Naive thymus-derived CD4-positive, alpha-beta T cell (primary cell): ENCODE measurements at regions of chr4 and their contacts with region 1.

Region 1: GRCh38 chr4:155353923-155354540 is 22.7 kb downstream of the MAP9 start:
- DNase-seq: no peak
- ATAC-seq: peak; percentile 65
- H3K4me3 ChIP-seq: no peak overlapping the region
- H3K4me3 Mint-ChIP-seq: no peak overlapping the region
- H3K27ac ChIP-seq: no peak overlapping the region
- H3K27ac Mint-ChIP-seq: no peak overlapping the region
- H3K4me1 ChIP-seq: no peaks in the 10 kb centered on the region
- H3K4me1 Mint-ChIP-seq: peaks cover 0 to 5% (median 0%) of the 10 kb centered on the region in 7 donors
- H3K27me3 ChIP-seq: no peaks in the 10 kb centered on the region
- H3K27me3 Mint-ChIP-seq: no peaks in the 10 kb centered on the region

Region 2: GRCh38 chr4:154807042-154807630 is 546.9 kb before region 1 on chr4:
- CTCF ChIA-PET with region 1: no interaction called
- POLR2A ChIA-PET with region 1: no interaction called
- intact Hi-C with region 1: loop called (anchors 5 kb)
- DNase-seq: peak in 1 of 9 donors; percentile 15
- ATAC-seq: peak; percentile 41
- H3K4me3 ChIP-seq: no peak overlapping the region
- H3K4me3 Mint-ChIP-seq: peak overlapping the region in 1 of 10 donors; percentile 6
- H3K27ac ChIP-seq: no peak overlapping the region
- H3K27ac Mint-ChIP-seq: no peak overlapping the region
- H3K4me1 ChIP-seq: no peaks in the 10 kb centered on the region
- H3K4me1 Mint-ChIP-seq: peaks cover 0 to 4% (median 0%) of the 10 kb centered on the region in 7 donors
- H3K27me3 ChIP-seq: no peaks in the 10 kb centered on the region
- H3K27me3 Mint-ChIP-seq: peaks cover 0 to 16% (median 7%) of the 10 kb centered on the region in 5 donors

Region 3: DNA sequence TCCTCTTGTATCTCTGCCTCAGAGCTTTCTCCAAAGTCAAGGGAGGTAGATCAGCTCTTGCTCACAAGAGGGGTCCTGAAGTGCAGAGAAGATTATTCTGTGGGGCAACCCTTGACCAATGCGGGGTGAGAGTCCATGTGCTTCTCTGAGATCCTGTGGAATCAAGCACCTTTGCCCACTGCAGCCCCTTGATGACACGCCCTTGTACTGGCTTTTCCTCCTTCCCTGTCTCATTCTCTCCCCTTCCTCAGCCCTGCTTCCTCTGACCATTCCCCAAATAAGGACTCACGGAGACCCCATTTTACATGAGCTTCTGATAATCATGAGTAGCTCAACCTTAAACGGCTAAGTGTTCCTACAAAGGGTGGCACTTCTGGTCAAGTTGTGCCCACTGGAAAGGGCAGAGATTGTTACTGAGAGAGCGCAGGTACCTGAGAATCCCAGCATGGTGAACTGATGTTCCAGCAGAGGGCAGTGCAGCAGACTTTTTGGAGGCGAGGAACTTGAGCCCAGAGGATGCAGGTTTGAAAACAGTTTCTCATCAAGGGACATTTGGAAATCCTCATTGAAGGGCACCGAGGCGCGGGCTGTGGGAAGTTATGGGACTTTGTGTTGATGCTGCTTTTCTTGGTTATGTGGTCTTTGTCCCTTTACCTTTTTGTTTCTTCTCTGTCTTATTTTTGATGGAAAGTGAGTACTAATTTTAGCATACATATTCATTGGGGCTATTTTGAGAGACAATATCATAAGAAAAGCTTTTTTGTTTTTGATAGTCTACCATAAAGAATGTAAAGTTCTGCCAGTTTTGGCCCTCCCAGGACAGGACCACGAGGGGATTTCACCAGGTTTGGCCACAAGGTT is 371.6 kb before region 1 on chr4:
- CTCF ChIA-PET with region 1: no interaction called
- POLR2A ChIA-PET with region 1: no interaction called
- intact Hi-C with region 1: loop called in 1 of 2 experiments (anchors 5 kb)
- DNase-seq: peak in 5 of 9 donors; percentile 3 to 24 (median 7)
- ATAC-seq: peak; percentile 38
- H3K4me3 ChIP-seq: no peak overlapping the region
- H3K4me3 Mint-ChIP-seq: no peak overlapping the region
- H3K27ac ChIP-seq: no peak overlapping the region
- H3K27ac Mint-ChIP-seq: no peak overlapping the region
- H3K4me1 ChIP-seq: no peaks in the 10 kb centered on the region
- H3K4me1 Mint-ChIP-seq: peaks cover 0 to 3% (median 0%) of the 10 kb centered on the region in 7 donors
- H3K27me3 ChIP-seq: no peaks in the 10 kb centered on the region
- H3K27me3 Mint-ChIP-seq: peaks cover 0 to 19% (median 9%) of the 10 kb centered on the region in 5 donors